ENCODE measurements at regions of chr20 and their contacts with region 1.

Region 1: GRCh38 chr20:34538671-34539123 is 19.8 kb upstream of the MAP1LC3A start:
- DNase-seq: peak; percentile 61
- ATAC-seq: peak; percentile 68
- H3K4me3 ChIP-seq: no peak overlapping the region
- H3K27ac ChIP-seq: no peak overlapping the region
- H3K4me1 ChIP-seq: peaks cover 9% of the 10 kb centered on the region
- H3K27me3 ChIP-seq: no peaks in the 10 kb centered on the region
- CTCF ChIP-seq: peak; percentile 99
- EP300 ChIP-seq: 0 out of 4 replicates have a peak, but pooled peaks of 1 of the 2 experiments have one; percentile 23
- POLR2A ChIP-seq: no peak
- RAD21 ChIP-seq: peak; percentile 82

Region 2: GRCh38 chr20:34654207-34654744 is 115.6 kb after region 1 on chr20:
- CTCF ChIA-PET with region 1: no interaction called
- POLR2A ChIA-PET with region 1: no interaction called
- in situ Hi-C with region 1: no loop called
- intact Hi-C with region 1: no loop called
- DNase-seq: no peak
- ATAC-seq: no peak
- H3K4me3 ChIP-seq: no peak overlapping the region
- H3K27ac ChIP-seq: no peak overlapping the region
- H3K4me1 ChIP-seq: no peaks in the 10 kb centered on the region
- H3K27me3 ChIP-seq: no peaks in the 10 kb centered on the region
- CTCF ChIP-seq: no peak
- EP300 ChIP-seq: no peak
- POLR2A ChIP-seq: no peak
- RAD21 ChIP-seq: no peak

Region 3: DNA sequence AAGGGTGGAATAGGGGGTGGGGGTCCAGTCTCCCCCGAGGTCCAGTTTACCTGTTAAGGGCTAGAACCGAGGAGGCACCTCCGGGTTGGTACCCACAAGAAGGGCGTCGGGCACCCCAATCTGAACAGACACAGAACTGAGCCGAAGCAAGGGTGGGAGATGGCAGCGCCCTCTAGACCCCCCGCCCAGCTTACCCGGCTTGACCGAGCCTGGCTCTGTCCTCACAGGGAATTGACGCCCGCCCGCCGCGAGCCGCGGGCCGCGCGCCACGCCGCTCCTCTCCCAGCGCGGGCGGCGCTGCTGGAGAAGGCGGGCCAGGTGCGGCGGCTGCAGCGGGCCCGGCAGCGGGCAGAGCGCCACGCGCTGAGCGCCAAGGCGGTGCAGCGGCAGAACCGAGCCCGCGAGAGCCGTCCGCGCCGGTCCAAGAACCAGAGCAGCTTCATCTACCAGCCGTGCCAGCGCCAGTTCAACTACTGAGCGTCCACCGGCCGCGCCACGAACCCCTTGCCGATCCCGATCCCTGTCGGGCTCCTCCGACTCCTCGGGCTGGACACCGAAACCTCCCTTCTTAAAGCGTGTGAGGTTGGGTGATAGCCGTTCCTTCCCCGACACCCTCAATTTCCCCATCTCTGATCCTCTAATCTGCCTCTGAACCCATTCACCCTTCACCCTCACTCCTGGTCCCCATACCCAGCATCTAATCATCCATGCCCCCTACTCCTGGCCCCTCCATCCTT is 171.3 kb after region 1 on chr20:
- CTCF ChIA-PET with region 1: interaction called, 4 read pairs
- POLR2A ChIA-PET with region 1: no interaction called
- in situ Hi-C with region 1: loop called (anchors 5 kb)
- intact Hi-C with region 1: loop called (anchors 5 kb)
- DNase-seq: no peak
- ATAC-seq: no peak
- H3K4me3 ChIP-seq: no peak overlapping the region
- H3K27ac ChIP-seq: no peak overlapping the region
- H3K4me1 ChIP-seq: peaks cover 79% of the 10 kb centered on the region
- H3K27me3 ChIP-seq: no peaks in the 10 kb centered on the region; a peak in 1 of 5 replicates
- CTCF ChIP-seq: peak; percentile 31
- EP300 ChIP-seq: no peak
- POLR2A ChIP-seq: 0 out of 4 replicates have a peak, but pooled peaks of 1 of the 2 experiments have one; percentile 6
- RAD21 ChIP-seq: no peak

Region 4: GRCh38 chr20:34768096-34768495 is 229.4 kb after region 1 on chr20:
- CTCF ChIA-PET with region 1: interaction called, 21 read pairs
- POLR2A ChIA-PET with region 1: interaction called, 3 read pairs
- in situ Hi-C with region 1: no loop called
- intact Hi-C with region 1: loop called (anchors 1 kb)
- DNase-seq: no peak
- ATAC-seq: no peak
- H3K4me3 ChIP-seq: no peak overlapping the region
- H3K27ac ChIP-seq: no peak overlapping the region
- H3K4me1 ChIP-seq: no peaks in the 10 kb centered on the region
- H3K27me3 ChIP-seq: no peaks in the 10 kb centered on the region
- CTCF ChIP-seq: no peak
- EP300 ChIP-seq: no peak
- POLR2A ChIP-seq: no peak
- RAD21 ChIP-seq: no peak

Measured in HepG2 (cell line).